ENCODE measurements at regions of chr12 and their contacts with region 1.

Region 1: DNA sequence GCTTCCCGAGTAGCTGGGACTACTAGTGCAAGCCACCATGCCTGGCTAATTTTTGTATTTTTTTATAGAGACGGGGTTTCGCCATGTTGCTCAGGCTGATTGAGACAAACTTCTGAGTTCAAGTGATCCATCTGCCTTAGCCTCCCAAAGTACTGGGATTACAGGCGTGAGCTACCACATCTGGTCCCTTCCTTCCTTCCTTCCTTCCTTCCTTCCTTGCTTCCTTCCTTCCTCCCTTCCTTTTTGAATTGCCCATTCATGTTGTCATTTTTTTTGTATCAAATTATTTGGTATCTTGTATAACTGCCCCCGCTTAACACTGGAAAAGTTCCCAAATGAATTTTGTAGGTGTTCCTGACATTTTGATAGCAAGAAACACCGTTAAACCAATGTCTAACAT is 11.7 kb downstream of the RAD9B start:
- DNase-seq: no peak
- H3K4me3 ChIP-seq: no peak overlapping the region
- H3K27ac ChIP-seq: no peak overlapping the region
- H3K4me1 ChIP-seq: no peaks in the 10 kb centered on the region
- H3K27me3 ChIP-seq: no peaks in the 10 kb centered on the region
- CTCF ChIP-seq: no peak
- POLR2A ChIP-seq: no peak

Region 2: DNA sequence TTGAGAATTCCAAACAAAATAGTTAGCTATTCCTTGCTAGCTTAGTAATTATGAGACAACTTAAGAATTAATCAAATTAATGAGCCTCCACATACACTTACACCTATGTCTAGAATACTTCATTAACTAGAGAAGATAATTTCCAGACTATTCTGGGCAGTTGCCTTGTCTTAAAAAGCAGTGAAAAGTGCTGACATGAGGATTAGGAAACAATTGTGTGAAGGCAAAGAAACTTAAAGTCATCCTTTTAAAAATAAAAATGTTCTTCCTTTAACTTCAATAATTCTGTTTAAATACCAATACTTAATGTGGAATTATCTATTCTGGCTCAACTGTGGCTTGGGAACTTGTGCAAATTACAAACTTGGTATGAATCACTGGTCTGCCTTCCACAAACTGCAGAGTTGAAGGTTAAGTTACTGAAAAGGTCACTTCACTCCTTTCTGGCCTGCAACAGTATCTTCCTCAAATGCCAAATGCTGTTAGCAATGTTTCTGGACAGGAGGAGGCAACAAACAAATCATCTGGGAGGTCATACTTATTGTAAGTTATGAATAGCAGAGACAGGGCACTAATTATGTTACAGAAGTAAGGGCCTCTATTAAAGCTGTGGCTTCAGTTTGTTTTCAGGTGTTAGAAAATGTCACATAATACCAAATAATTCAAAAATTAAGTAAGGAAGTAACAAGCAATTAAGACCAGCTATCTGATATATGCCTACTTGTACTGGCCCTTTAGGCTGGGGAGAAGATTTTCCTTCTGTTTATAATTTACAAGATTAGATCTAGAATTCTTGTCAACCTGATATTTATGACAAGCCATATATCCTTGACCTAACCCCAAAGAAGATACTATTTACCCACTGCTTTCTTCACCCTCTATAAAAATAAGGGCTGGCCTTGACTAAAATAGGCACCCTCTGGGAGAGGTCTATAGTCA is 50.1 kb after region 1 on chr12:
- intact Hi-C with region 1: no loop called
- DNase-seq: peak; percentile 40
- H3K4me3 ChIP-seq: no peak overlapping the region
- H3K27ac ChIP-seq: peak overlapping the region; percentile 47 to 65
- H3K4me1 ChIP-seq: peaks cover 30% of the 10 kb centered on the region
- H3K27me3 ChIP-seq: no peaks in the 10 kb centered on the region
- CTCF ChIP-seq: no peak
- POLR2A ChIP-seq: no peak

Region 3: GRCh38 chr12:110600254-110600653 is 86.4 kb after region 1 on chr12:
- intact Hi-C with region 1: loop called (anchors 5 kb)
- DNase-seq: no peak
- H3K4me3 ChIP-seq: no peak overlapping the region
- H3K27ac ChIP-seq: no peak overlapping the region
- H3K4me1 ChIP-seq: no peaks in the 10 kb centered on the region
- H3K27me3 ChIP-seq: no peaks in the 10 kb centered on the region
- CTCF ChIP-seq: peak; percentile 29 to 54 (median 49)
- POLR2A ChIP-seq: no peak

Region 4: DNA sequence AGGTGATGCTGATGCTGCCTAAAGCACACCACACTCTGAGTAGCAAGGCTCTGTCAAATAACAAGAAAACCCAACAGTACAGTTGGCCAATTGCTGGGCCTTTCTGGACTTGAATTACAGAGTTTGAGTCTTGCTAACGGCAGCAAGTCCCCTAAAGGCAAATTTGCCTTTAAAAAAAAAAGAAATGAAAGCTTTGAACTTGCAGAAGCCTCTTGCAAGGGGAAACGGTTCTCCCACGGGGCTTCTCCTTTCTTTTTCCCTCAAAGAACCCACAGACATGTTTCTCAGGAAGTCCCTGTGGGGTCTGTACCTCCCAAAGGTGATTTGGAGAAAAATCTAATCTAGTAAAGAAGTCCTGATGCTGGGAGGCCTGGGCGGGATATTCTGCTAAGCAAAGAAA is 597.8 kb after region 1 on chr12:
- intact Hi-C with region 1: no loop called
- DNase-seq: no peak
- H3K4me3 ChIP-seq: no peak overlapping the region
- H3K27ac ChIP-seq: no peak overlapping the region
- H3K4me1 ChIP-seq: no peaks in the 10 kb centered on the region
- H3K27me3 ChIP-seq: no peaks in the 10 kb centered on the region
- CTCF ChIP-seq: no peak
- POLR2A ChIP-seq: no peak